ENCODE measurements at regions of chr3 and their contacts with region 1.

Region 1: DNA sequence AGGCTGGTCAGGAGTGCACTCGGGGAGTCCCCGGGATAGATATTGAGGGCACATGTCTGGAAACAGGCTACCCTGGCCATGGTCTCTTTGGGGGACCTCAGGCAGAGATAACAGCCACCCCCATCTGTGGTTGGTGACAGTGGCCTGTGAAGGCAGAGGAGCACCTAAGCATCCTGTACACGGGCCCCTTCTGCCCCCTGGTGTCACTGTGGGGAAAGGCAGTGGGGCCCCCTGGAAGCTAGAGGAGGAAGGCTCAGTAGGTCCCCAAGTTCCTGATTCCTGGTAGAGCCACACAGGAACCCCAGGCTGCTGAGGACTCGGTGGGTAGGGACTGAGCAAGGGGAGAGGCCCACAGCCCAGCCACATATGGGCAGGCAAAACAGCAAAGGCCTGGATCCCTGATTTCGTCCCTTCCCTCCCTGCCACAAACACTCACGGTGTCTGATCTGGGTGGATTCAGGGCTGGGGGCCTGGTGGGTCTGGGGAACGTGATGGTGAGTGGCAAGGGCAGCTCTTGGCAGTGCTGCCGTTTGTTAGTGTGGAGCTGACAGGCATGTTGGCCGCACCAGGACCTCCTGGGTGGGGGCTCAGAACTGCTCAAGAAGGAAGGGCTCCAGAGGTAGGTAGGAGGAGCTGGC is 14.1 kb upstream of the CXCR6 start:
- DNase-seq: peak in 1 of 4 donors; percentile 28
- ATAC-seq: peak; percentile 80
- H3K4me3 ChIP-seq: no peak overlapping the region
- H3K27ac ChIP-seq: no peak overlapping the region
- H3K4me1 ChIP-seq: peaks cover 0 to 7% of the 10 kb centered on the region in 2 donors
- H3K27me3 ChIP-seq: no peaks in the 10 kb centered on the region
- CTCF ChIP-seq: peak; percentile 60 to 71

Region 2: DNA sequence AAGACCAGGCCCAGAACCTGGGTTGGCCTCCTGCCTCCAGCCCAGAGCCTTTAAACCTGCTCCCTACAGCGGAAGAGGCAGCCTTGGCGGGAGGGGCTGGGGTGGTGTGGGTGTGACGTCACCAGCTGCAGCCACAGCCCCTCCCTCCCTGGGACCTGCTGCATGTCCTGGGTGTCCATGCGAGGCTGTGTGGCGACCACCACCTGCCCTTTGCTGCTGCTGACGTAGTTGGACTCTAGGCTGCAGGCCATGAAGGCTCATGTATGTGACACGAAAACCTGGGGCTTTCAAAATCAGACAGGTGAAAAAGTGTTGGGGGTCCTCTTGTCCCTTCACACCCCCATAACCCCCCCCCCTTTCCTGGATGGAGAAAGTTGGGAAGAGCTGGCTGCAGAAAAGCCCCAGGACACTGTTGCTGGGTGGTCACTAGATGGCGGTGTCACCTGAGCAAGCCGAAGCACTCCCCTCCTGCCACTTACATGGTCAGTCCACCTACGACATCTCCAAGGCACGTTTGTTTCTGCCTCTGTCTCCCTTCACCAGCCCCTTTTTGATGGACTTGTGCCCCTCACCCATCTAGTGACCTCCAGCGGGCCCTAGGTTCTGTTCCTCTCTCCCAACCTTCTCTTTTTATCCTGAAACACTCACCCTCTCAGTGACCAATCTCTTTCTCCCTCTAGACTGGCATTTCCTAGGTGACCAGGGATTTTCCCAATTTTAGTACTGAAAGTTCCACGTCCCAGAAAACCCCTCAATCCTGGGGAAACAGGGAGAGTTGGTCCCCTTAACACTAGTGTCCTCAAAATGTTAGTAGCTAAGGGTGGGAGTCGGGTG is 168.1 kb before region 1 on chr3:
- intact Hi-C with region 1: loop called in 1 of 2 experiments (anchors 10 kb)
- DNase-seq: peak in 1 of 4 donors; percentile 68
- ATAC-seq: peak; percentile 98
- H3K4me3 ChIP-seq: no peak overlapping the region
- H3K27ac ChIP-seq: no peak overlapping the region
- H3K4me1 ChIP-seq: no peaks in the 10 kb centered on the region
- H3K27me3 ChIP-seq: no peaks in the 10 kb centered on the region
- CTCF ChIP-seq: peak; percentile 59

Region 3: DNA sequence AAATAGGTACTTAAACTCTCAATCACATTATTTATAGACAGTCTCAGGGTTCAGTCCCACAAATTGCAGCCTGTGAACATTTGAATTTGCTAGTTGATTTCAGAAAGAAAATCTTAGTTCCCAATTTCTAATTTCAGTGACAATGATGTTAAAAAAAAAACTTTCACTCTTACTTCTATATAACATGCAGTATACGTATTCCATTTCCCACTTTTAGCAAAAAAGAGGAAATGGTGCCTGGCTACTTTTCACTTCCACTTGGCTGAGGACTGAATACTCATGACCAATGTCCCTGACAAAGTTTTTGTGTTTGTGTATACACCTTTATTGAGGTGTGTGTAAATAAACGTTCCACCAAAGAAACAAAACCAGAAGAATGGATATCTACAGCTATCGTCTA is 130.3 kb after region 1 on chr3:
- intact Hi-C with region 1: no loop called
- DNase-seq: no peak
- ATAC-seq: peak; percentile 53
- H3K4me3 ChIP-seq: no peak overlapping the region
- H3K27ac ChIP-seq: peak overlapping the region in 1 of 2 donors; percentile 13
- H3K4me1 ChIP-seq: peaks cover 0 to 8% of the 10 kb centered on the region in 2 donors
- H3K27me3 ChIP-seq: no peaks in the 10 kb centered on the region
- CTCF ChIP-seq: no peak

Measured in left lung (tissue), 14 donors.